GM10248 (cell line): ENCODE measurements at regions of chr1 and their contacts with region 1.

Region 1: DNA sequence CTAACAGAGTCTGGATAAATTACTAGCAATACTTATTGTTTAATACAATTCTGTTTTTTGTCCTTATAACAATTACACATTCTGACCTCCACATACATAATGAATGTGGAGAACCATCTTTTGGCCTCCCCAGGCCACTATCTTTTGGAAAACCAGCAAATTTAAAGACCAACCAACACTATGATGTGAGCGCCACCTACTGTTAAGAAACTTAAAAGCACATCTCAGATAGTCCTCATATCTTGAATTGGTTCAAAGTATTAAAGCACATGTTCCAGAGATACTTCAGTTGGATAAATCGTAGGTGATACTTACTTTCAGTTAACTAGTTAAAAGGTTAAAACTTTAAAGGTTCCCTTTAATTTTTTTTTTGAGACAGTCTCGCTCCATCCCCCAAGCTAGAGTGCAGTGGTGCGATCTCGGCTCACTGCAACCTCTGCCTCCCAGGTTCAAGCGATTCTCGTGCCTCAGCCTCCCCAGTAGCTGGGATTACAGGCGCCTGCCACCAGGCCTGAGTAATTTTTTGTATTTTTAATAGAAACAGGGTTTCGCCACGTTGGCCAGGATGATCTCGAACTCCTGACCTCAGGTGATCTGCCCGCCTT is 29.3 kb upstream of the USP1 start:
- DNase-seq: peak; percentile 49
- CTCF ChIP-seq: peak; percentile 75

Region 2: GRCh38 chr1:62175568-62176179 is 231.8 kb before region 1 on chr1:
- CTCF ChIA-PET with region 1: interaction called, 74 read pairs
- POLR2A ChIA-PET with region 1: no interaction called
- DNase-seq: peak; percentile 55
- CTCF ChIP-seq: peak; percentile 80

Region 3: DNA sequence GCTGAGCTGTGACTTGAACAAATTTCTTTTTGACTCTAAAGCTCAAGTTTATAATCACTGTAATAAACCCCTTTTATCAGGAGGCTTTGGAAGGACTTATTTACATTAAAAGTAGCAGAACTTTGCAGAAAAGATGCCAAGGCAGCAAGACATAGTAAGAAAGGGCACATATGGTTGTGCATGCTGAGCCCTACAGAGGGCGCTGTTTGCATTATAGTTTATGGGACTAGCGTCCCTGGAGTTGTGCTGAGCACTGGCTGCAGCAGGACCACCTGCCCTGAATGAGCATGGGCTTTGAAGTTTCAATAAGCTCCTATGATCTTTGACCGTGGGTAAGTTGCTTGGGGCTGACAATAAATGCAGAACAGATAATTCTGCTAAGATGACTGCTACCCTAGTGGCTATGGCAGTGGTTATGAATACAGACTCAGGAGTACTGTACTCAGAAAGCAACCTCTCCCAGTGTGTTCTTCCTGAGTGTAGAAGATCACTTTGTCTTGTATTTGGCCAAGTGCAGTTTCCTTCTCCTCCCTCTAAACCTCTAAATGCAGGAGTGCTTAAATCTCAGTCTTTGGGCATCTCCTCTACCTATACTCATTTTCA is 16.0 kb before region 1 on chr1:
- CTCF ChIA-PET with region 1: interaction called, 10 read pairs
- POLR2A ChIA-PET with region 1: no interaction called
- DNase-seq: peak; percentile 30
- CTCF ChIP-seq: peak; percentile 38

Region 4: GRCh38 chr1:62643283-62643682 is 235.8 kb after region 1 on chr1:
- CTCF ChIA-PET with region 1: no interaction called
- POLR2A ChIA-PET with region 1: no interaction called
- DNase-seq: no peak
- CTCF ChIP-seq: no peak